CD14-positive monocyte (primary cell): ENCODE measurements at regions of chr6 and their contacts with region 1.

Region 1: DNA sequence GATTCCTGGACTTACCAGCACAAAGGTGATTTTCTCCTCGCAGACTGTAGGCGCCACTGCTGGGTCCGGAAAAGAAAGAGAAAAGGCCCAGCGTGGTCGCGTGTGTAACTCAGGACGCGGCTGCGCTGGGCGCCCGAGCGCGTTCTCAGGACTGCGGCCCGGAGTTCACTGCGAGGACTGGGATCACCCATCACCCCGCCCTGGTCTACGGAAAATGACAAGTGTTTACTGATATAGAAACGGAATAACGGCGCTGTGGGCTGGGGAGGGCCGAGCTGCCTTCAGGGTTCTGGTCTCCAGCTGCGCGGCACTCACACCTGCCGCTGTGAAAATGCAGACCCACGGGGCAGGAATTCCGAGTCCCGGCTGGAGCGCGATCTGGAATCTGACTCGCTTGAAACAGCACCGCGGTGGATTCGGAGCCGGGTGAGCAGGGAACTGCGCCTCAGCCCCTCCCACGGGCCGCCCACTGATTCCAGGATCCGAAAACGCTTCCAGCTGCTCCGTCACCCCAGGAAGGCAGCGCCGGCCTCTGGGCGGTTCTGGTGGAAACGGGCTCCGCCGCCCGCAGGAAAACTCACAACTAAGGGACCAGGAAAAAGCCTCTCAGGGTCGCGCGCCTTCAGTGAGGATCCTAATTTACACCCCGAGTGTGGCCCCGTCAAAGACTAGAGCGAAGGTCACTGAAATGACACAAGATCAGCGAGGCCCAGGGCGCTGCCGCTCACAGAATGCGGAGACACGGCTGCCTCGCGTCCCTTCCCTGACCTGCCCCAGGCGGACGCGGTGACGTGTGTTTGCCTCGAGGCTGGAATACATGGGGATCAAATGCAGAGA is 34.5 kb downstream of the HLA-A start:
- DNase-seq: peak; percentile 53 to 59 (median 56)
- H3K4me3 ChIP-seq: peak overlapping the region; percentile 30 to 73 (median 33)
- H3K4me3 Mint-ChIP-seq: peak overlapping the region; percentile 93 to 99
- H3K27ac ChIP-seq: no peak overlapping the region
- H3K27ac Mint-ChIP-seq: peak overlapping the region in 4 of 7 donors; percentile 24 to 81 (median 74)
- H3K4me1 ChIP-seq: peaks cover 24 to 32% of the 10 kb centered on the region in 2 donors
- H3K4me1 Mint-ChIP-seq: peaks cover 44% of the 10 kb centered on the region
- H3K27me3 ChIP-seq: peaks cover 33 to 55% of the 10 kb centered on the region in 2 donors
- H3K27me3 Mint-ChIP-seq: peaks cover 55 to 65% (median 65%) of the 10 kb centered on the region in 3 donors
- CTCF ChIP-seq: no peak

Region 2: DNA sequence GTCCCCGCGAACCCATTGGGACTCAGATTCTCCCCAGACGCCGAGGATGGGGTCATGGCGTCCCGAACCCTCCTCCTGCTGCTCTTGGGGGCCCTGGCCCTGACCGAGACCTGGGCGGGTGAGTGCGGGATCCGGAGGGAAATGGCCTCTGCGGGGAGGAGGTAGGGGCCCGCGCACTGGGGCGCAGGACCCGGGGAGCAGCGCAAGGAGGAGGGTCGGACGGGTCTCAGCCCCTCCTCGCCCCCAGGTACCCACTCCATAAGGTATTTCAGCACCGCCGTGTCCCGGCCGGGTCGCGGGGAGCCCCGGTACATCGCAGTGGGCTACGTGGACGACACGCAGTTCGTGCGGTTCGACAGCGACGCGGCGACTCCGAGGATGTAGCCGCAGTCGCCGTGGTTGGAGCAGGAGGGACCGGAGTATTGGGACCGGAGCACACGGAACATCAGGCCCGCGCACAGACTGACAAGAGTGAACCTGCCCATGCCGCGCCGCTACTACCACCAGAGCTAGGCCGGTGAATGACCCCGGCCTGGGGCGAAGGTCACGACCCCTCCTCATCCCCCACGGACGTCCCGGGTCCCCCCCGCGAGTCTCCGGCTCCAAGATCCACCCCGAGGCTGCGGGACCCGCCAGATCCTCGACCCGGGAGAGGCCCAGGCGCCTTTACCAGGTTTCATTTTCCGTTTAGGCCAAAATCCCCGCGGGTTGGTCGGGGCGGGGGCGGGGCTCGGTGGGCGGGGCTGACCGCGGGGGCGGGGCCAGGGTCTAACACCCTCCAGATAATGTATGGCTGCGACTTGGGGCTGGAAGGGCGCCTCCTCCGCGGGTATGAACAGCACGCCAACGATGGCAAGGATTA is 50.2 kb before region 1 on chr6:
- intact Hi-C with region 1: loop called in 1 of 2 experiments (anchors 10 kb)
- DNase-seq: peak; percentile 83 to 90 (median 84)
- H3K4me3 ChIP-seq: peak overlapping the region; percentile 63 to 93 (median 79)
- H3K4me3 Mint-ChIP-seq: peak overlapping the region in 1 of 2 donors; percentile 89
- H3K27ac ChIP-seq: peak overlapping the region; percentile 94 to 99
- H3K27ac Mint-ChIP-seq: peak overlapping the region in 6 of 7 donors; percentile 95 to 99 (median 96)
- H3K4me1 ChIP-seq: peaks cover 23 to 29% of the 10 kb centered on the region in 2 donors
- H3K4me1 Mint-ChIP-seq: peaks cover 31% of the 10 kb centered on the region
- H3K27me3 ChIP-seq: no peaks in the 10 kb centered on the region
- H3K27me3 Mint-ChIP-seq: no peaks in the 10 kb centered on the region
- CTCF ChIP-seq: no peak

Region 3: DNA sequence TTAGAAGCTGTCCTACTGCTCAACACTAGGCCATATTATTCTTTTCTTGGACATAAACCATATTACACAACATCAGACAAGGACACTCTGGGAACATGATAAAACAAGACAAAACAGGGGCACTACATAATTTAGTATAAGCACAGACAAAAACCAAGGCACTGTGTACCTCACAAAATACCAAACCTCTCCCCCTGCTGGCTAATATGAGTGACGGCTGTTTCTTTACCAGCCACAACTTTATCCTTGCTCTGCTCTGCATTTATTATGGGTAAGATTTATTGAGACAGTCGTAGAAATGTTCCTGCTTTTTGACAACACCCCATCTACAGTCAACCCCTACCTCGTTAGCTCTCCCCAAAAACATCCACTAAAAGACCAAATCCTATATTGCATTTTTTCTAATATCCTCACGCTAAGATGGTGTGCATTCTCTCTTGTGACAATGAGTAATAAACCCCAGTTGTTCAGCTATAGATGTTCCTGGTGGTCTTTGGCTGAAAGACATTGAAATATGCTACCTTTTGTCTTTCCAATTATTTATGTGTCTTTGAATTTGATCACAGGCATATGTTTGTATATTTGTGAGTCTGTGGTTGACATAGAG is 60.5 kb after region 1 on chr6:
- intact Hi-C with region 1: no loop called
- DNase-seq: peak in 2 of 3 donors; percentile 15 to 28
- H3K4me3 ChIP-seq: no peak overlapping the region
- H3K4me3 Mint-ChIP-seq: no peak overlapping the region
- H3K27ac ChIP-seq: no peak overlapping the region
- H3K27ac Mint-ChIP-seq: peak overlapping the region in 1 of 7 donors; percentile 12
- H3K4me1 ChIP-seq: peaks cover 17 to 22% of the 10 kb centered on the region in 2 donors
- H3K4me1 Mint-ChIP-seq: peaks cover 26% of the 10 kb centered on the region
- H3K27me3 ChIP-seq: no peaks in the 10 kb centered on the region
- H3K27me3 Mint-ChIP-seq: no peaks in the 10 kb centered on the region
- CTCF ChIP-seq: peak; percentile 75